CD4-positive, alpha-beta T cell (primary cell): ENCODE measurements at regions of chr12 and their contacts with region 1.

Region 1: DNA sequence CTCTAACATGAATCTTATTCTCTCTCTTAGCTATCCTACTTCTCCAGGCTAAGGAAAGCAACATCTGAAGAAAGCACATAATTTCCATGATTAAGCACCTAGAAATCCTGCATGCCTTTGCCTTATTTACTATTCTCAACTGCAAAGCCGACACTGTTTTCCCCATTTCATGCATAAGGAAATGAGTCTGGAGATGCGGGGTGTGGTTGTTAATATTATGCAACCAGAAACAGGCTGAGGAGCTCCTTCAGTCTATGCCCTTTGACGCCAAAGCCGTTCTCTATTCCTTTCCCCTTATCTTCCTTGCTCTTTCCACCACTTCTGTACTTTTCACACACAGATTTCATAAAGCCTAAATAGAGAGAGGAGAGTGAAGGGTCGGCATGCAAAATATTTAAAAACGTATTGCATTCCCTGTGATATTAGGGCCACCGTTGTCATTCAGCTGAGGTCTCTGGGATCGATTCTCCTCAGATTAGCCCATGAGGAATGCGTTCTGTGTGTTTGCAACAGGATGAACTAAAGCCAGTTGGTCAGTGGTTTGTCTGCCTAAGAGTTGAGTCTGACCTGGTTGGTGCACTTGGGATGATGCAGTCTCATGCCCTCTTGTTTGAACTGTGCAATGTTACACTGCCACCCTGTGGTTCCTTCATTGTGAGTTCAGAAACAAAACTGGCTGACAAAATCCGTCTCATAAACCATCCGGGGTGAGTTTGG is 53.1 kb upstream of the PLEKHG7 start:
- DNase-seq: peak; percentile 33 to 85 (median 50)
- ATAC-seq: peak; percentile 91
- H3K4me3 ChIP-seq: no peak overlapping the region
- H3K4me3 Mint-ChIP-seq: no peak overlapping the region
- H3K27ac ChIP-seq: no peak overlapping the region
- H3K27ac Mint-ChIP-seq: no peak overlapping the region
- H3K4me1 ChIP-seq: peaks cover 3% of the 10 kb centered on the region
- H3K4me1 Mint-ChIP-seq: no peaks in the 10 kb centered on the region
- H3K27me3 ChIP-seq: no peaks in the 10 kb centered on the region
- H3K27me3 Mint-ChIP-seq: no peaks in the 10 kb centered on the region
- CTCF ChIP-seq: peak; percentile 81

Region 2: DNA sequence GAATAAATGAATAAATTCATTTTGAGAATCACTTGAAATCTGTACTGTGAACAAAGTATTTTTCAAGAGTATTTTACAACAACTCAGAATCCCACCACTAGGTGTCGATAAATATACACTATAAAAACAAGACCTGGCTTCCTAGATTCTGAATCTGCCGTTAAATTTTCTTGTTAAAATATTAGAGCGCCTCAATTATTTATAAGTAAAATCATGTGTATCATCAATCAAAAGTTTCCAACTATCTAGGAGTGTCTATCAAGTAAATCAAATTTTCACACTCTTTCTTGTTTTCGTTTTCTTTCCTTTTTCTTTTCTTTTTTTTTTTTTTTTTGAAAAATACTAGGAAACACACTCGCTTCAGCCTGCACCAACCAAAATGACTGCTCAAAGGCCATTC is 1287.8 kb before region 1 on chr12:
- CTCF ChIA-PET with region 1: no interaction called
- POLR2A ChIA-PET with region 1: no interaction called
- intact Hi-C with region 1: loop called (anchors 1 to 2 kb)
- DNase-seq: peak in 3 of 14 experiments; percentile 46 to 61 (median 59)
- ATAC-seq: no peak
- H3K4me3 ChIP-seq: no peak overlapping the region
- H3K4me3 Mint-ChIP-seq: no peak overlapping the region
- H3K27ac ChIP-seq: no peak overlapping the region
- H3K27ac Mint-ChIP-seq: no peak overlapping the region
- H3K4me1 ChIP-seq: no peaks in the 10 kb centered on the region
- H3K4me1 Mint-ChIP-seq: no peaks in the 10 kb centered on the region
- H3K27me3 ChIP-seq: no peaks in the 10 kb centered on the region
- H3K27me3 Mint-ChIP-seq: peaks cover 7% of the 10 kb centered on the region
- CTCF ChIP-seq: peak; percentile 64

Region 3: DNA sequence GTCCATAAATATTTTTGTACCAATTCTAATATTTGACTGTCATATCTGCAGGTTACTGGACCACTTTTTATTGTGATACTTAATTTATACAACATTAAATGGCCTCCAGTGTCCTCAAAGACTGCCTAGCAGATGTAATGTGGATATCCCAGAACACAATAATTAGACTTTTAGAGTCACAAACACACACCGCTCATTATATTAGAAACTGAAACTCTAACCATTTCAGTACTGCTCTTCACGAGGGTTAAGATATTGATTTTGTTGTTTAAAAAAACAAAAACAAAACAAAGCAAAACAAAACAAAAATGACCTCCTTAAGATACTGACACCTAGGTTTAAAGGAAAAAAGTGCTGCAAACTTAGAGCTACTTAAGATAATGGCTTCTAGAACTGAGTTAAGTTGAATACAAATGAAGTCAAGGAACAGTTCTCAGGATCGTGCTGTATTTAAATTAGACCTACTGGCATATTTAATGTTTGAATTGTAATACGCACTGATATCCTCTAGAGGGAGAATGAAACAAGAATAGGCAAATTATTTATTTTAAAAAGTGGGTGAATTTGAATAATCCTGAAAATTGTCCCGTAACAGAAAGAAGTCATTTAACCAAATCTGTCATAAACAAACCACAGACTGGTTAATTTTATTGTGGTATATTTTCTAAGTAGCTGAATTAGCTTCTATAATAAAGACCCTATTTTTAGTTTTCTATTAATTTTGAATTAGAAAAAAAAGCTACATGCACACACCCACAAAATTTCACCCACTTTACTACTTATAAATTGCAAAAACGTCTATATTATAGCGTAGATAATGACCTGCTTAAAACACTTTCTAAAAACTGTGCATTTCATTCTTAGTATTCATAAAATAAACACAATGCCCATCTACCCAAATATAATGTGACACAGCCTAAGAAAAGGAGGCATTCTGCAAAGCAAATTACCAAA is 1071.8 kb before region 1 on chr12:
- CTCF ChIA-PET with region 1: no interaction called
- POLR2A ChIA-PET with region 1: no interaction called
- intact Hi-C with region 1: loop called in 1 of 2 experiments (anchors 10 kb)
- DNase-seq: peak in 3 of 14 experiments; percentile 47 to 57 (median 50)
- ATAC-seq: peak; percentile 82
- H3K4me3 ChIP-seq: peak overlapping the region; percentile 47
- H3K4me3 Mint-ChIP-seq: peak overlapping the region; percentile 76
- H3K27ac ChIP-seq: no peak overlapping the region
- H3K27ac Mint-ChIP-seq: peak overlapping the region; percentile 28
- H3K4me1 ChIP-seq: no peaks in the 10 kb centered on the region
- H3K4me1 Mint-ChIP-seq: peaks cover 15% of the 10 kb centered on the region
- H3K27me3 ChIP-seq: no peaks in the 10 kb centered on the region
- H3K27me3 Mint-ChIP-seq: no peaks in the 10 kb centered on the region
- CTCF ChIP-seq: peak; percentile 85

Region 4: DNA sequence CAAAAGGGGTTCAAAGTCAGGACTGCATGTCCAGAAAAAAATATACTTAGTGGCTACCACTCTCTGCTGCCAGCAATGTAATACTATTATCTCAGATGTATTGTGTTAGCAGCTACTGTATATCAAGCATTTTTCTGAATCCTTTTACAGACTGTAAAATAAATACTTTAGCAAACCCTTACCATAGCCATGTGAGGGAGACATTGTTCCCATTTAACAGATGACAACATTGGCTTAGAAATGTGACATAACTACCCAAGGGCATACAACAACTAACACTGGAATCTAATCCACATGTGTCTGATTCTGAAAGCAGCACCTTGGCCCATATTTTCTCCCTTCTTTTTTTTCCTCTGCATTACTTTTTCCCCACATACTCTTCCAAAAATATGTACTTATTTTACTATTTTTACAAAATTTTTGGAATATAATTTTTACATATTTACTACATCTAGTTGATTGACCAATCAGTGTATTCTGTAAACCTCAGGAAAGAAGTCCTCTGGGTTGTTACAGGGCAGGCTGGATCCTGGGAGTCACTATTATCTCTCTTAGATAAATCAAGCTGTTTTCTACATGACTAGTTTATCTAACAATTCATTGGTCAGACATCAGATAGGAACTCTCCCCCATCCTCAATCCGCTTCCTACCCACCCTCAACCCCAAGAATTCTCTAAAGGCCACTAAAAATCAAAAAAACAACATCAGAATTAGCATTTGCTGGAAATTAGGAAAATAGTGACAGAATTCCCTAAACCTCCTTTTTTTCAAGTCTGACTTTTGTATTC is 658.1 kb before region 1 on chr12:
- CTCF ChIA-PET with region 1: no interaction called
- POLR2A ChIA-PET with region 1: no interaction called
- intact Hi-C with region 1: loop called in 1 of 2 experiments (anchors 5 kb)
- DNase-seq: peak in 3 of 14 experiments; percentile 72 to 79 (median 76)
- ATAC-seq: peak; percentile 89
- H3K4me3 ChIP-seq: no peak overlapping the region
- H3K4me3 Mint-ChIP-seq: peak overlapping the region; percentile 6
- H3K27ac ChIP-seq: no peak overlapping the region
- H3K27ac Mint-ChIP-seq: peak overlapping the region; percentile 59
- H3K4me1 ChIP-seq: peaks cover 3% of the 10 kb centered on the region
- H3K4me1 Mint-ChIP-seq: peaks cover 75% of the 10 kb centered on the region
- H3K27me3 ChIP-seq: no peaks in the 10 kb centered on the region
- H3K27me3 Mint-ChIP-seq: no peaks in the 10 kb centered on the region
- CTCF ChIP-seq: peak; percentile 58

Region 5: GRCh38 chr12:92511786-92512185 is 137.9 kb before region 1 on chr12:
- CTCF ChIA-PET with region 1: no interaction called
- POLR2A ChIA-PET with region 1: no interaction called
- intact Hi-C with region 1: no loop called
- DNase-seq: no peak
- ATAC-seq: no peak
- H3K4me3 ChIP-seq: no peak overlapping the region
- H3K4me3 Mint-ChIP-seq: no peak overlapping the region
- H3K27ac ChIP-seq: no peak overlapping the region
- H3K27ac Mint-ChIP-seq: no peak overlapping the region
- H3K4me1 ChIP-seq: no peaks in the 10 kb centered on the region
- H3K4me1 Mint-ChIP-seq: no peaks in the 10 kb centered on the region
- H3K27me3 ChIP-seq: no peaks in the 10 kb centered on the region
- H3K27me3 Mint-ChIP-seq: no peaks in the 10 kb centered on the region
- CTCF ChIP-seq: no peak